HEK293 (cell line): ENCODE measurements at regions of chr15 and their contacts with region 1.

Region 1: GRCh38 chr15:74545880-74546656 is 5.0 kb downstream of the ARID3B start:
- H3K4me3 ChIP-seq: no peak overlapping the region
- H3K27ac ChIP-seq: no peak overlapping the region
- H3K4me1 ChIP-seq: peaks cover 34% of the 10 kb centered on the region
- CTCF ChIP-seq: peak; percentile 21; the same call in 1 of the 2 replicates

Region 2: GRCh38 chr15:74382004-74382816 is 163.9 kb before region 1 on chr15:
- CTCF ChIA-PET with region 1: interaction called, 10 read pairs
- POLR2A ChIA-PET with region 1: interaction called, 5 read pairs
- H3K4me3 ChIP-seq: no peak overlapping the region
- H3K27ac ChIP-seq: no peak overlapping the region
- H3K4me1 ChIP-seq: no peaks in the 10 kb centered on the region
- CTCF ChIP-seq: peak; percentile 95

Region 3: DNA sequence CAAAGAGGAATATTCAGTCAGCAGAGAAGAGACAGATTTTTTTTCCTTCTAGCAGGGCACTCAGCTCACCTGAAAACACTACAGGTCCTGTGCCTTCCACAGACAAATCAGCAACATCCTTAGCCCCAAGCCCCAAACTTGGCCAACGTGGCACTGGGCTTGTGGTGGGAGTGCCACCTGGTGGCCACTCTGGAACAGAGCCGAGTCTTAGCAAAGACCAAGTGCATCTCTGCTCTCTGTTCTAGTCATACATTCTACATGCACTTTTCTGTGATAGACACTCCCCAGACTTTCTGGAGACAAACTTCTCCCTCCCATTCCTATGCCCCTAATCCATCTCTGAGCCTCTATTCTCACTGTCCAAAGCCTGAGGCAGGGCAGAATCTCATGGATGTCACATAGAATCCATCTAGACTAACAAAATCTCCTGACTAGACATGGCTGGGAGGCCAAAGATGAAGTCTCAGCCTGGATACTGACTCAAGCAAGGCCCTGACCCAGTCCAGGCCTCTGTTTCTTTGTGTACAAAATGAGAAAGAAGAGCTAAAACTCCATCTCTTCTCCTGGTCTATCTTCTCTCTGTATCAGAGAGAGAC is 107.2 kb before region 1 on chr15:
- CTCF ChIA-PET with region 1: interaction called, 14 read pairs
- POLR2A ChIA-PET with region 1: interaction called, 3 read pairs
- H3K4me3 ChIP-seq: no peak overlapping the region
- H3K27ac ChIP-seq: no peak overlapping the region
- H3K4me1 ChIP-seq: peaks cover 4% of the 10 kb centered on the region
- CTCF ChIP-seq: peak; percentile 93

Region 4: GRCh38 chr15:74460871-74461846 is 84.9 kb before region 1 on chr15 and contains the start of gene UBL7:
- CTCF ChIA-PET with region 1: no interaction called
- POLR2A ChIA-PET with region 1: interaction called, 35 read pairs
- H3K4me3 ChIP-seq: peak within 1 kb of the TSS; percentile 91
- H3K27ac ChIP-seq: peak within 1 kb of the TSS; percentile 91
- H3K4me1 ChIP-seq: peaks cover 2% of the 10 kb centered on the region; the same call in 1 of the 2 replicates
- CTCF ChIP-seq: peak; percentile 85

Region 5: GRCh38 chr15:74531144-74531811 is 14.8 kb before region 1 on chr15:
- CTCF ChIA-PET with region 1: interaction called, 5 read pairs
- POLR2A ChIA-PET with region 1: interaction called, 23 read pairs
- H3K4me3 ChIP-seq: no peak overlapping the region
- H3K27ac ChIP-seq: 0 out of 2 replicates have a peak overlapping the region, but pooled peaks have one; percentile 12
- H3K4me1 ChIP-seq: peaks cover 9% of the 10 kb centered on the region
- CTCF ChIP-seq: no peak

Region 6: GRCh38 chr15:74615508-74616365 is 69.7 kb after region 1 on chr15 and contains the start of gene CLK3:
- CTCF ChIA-PET with region 1: interaction called, 6 read pairs
- POLR2A ChIA-PET with region 1: interaction called, 53 read pairs
- H3K4me3 ChIP-seq: peak within 1 kb of the TSS; percentile 85
- H3K27ac ChIP-seq: peak within 1 kb of the TSS; percentile 95
- H3K4me1 ChIP-seq: peaks cover 9% of the 10 kb centered on the region
- CTCF ChIP-seq: no peak

Region 7: DNA sequence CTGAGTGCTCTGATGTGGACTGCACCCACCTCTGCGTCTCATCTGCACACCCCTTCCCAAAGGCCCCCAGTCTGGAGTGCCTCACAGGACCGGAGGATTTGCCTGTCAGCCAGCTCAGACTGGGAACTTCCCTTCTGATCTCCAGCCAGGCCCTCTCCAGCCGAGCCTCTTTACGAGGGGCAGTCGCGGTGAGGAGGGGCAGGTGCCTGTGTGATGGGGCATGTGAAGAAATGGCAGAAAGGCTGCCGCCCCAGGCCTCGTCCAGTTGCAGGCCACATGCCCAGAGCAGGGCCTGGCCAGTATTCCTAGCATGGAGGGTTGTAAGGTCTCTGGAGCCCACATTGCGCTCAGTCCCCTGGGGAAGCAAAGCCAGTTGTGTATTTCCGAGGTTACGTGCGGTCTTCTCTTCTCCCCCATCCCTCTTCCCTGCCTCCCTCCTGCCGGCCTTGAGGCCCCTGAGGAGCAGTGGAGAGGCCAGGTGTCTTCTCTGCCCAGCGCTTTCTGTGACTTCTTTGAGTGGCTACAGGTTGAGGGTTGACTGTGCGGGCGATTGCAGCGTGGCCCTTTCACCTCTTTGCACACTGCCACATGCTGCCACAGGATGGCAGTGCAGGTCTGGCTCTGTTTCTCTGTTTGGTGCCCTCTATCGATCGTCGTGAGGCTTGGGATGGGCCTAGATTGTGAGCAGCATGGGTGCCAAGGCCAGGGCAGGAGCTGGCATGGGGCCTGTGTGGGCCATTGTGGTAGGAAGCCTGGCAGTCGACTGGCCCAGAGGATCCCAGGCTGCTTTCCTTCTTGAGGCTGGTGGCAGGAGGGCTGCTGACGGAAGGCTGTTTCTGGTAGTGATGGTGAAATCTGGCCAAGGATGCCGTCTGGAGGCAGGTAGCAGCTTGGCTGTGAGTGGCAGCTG is 74.8 kb after region 1 on chr15:
- CTCF ChIA-PET with region 1: interaction called, 10 read pairs
- POLR2A ChIA-PET with region 1: interaction called, 53 read pairs
- H3K4me3 ChIP-seq: no peak overlapping the region
- H3K27ac ChIP-seq: no peak overlapping the region
- H3K4me1 ChIP-seq: peaks cover 9% of the 10 kb centered on the region
- CTCF ChIP-seq: peak; percentile 100

Region 8: GRCh38 chr15:74727727-74728126 is 181.7 kb after region 1 on chr15:
- CTCF ChIA-PET with region 1: no interaction called
- POLR2A ChIA-PET with region 1: no interaction called
- H3K4me3 ChIP-seq: no peak overlapping the region
- H3K27ac ChIP-seq: no peak overlapping the region
- H3K4me1 ChIP-seq: no peaks in the 10 kb centered on the region; the same call in 1 of the 2 replicates
- CTCF ChIP-seq: no peak